Heart left ventricle (tissue), 16 donors: ENCODE measurements at regions of chr7 and their contacts with region 1.

Region 1: DNA sequence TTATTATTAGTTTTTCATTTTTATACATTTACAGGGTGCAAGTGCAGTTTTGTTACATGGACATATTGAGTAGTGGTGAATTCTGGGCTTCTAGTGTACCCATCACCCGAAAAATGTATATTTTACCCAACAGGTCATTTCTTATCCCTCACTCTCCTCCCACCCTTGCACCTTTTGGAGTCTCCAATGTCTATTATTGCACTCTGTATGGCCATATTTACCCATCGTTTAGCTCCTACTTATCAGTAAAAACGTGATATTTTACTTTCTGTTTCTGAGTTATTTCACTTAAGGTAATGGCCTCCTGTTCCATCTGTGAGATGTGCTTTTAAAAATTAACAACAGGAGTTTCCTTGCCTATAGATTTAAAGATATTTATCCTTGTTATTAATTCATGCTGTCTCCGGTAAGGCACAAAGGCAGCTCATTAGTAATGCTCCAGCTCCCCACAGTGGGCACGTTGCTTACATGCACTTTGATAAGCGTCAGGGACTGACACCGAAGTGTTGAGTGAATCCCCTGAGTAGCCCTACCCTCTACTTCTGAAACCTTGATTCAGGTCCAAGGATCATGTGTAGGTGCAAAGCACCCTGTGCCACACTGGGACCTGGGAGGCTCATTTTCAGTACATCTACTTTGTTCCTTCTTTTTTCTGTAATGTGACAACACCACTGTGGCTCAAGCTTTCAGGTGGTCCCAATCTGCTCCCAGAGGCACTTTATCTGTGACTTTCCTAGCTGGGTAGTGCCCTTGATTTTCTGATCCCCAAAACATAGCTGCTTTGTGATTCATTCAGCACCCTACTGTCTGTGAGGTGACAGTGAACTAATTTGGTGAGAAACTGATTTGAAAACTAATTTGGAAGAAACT is 27.3 kb downstream of the HYAL4 start:
- DNase-seq: peak in 4 of 5 donors; percentile 8 to 43 (median 32)
- ATAC-seq: peak; percentile 51 to 89 (median 88)
- H3K4me3 ChIP-seq: peak overlapping the region in 1 of 12 donors; percentile 8
- H3K27ac ChIP-seq: no peak overlapping the region
- H3K4me1 ChIP-seq: peaks cover 0 to 4% (median 0%) of the 10 kb centered on the region in 12 donors
- H3K27me3 ChIP-seq: peaks cover 0 to 3% (median 0%) of the 10 kb centered on the region in 9 donors
- CTCF ChIP-seq: peak; percentile 22 to 67 (median 54)
- POLR2A ChIP-seq: no peak

Region 2: GRCh38 chr7:123494193-123494796 is 377.9 kb before region 1 on chr7:
- intact Hi-C with region 1: loop called in 8 of 10 experiments (anchors 2 to 10 kb)
- DNase-seq: no peak
- ATAC-seq: no peak
- H3K4me3 ChIP-seq: no peak overlapping the region
- H3K27ac ChIP-seq: no peak overlapping the region
- H3K4me1 ChIP-seq: peaks cover 0 to 2% (median 0%) of the 10 kb centered on the region in 12 donors
- H3K27me3 ChIP-seq: peaks cover 0 to 4% (median 0%) of the 10 kb centered on the region in 9 donors
- CTCF ChIP-seq: peak; percentile 67 to 89 (median 80)
- POLR2A ChIP-seq: no peak

Region 3: DNA sequence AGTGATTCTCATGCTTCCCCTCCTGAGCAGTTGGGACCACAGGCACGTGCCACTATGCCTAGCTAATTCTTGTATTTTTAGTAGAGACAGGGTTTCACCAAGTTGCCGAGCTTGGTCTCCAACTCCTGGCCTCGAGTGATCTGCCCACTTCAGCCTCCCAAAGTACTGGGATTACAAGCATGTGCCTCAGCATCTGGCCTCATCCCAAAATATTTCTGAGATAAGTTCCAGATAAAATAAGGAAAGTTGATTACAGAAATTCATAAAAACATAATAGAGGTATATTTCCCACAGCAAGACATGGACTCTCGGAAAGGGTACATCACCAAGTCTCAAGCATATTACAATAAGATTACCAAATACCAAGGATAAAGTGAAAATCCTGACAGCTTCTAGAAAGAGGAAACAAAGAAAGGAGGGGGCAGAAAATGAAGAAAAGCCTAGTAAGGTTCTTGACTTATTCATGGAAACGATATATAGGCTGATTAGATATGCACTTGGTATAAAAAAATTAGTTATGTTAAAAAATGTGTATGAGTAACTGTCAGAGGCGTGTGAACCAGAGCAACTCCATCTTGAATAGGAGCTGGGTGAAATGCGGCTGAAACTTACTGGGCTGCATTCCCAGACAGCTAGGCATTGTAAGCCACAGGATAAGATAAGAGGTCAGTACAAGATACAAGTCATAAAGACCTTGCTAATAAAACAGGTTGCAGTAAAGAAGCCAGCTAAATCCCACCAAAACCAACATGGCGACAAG is 372.8 kb before region 1 on chr7:
- intact Hi-C with region 1: loop called in 8 of 10 experiments (anchors 2 to 10 kb)
- DNase-seq: no peak
- ATAC-seq: no peak
- H3K4me3 ChIP-seq: no peak overlapping the region
- H3K27ac ChIP-seq: no peak overlapping the region
- H3K4me1 ChIP-seq: no peaks in the 10 kb centered on the region
- H3K27me3 ChIP-seq: peaks cover 0 to 4% (median 0%) of the 10 kb centered on the region in 9 donors
- CTCF ChIP-seq: no peak
- POLR2A ChIP-seq: no peak

Region 4: DNA sequence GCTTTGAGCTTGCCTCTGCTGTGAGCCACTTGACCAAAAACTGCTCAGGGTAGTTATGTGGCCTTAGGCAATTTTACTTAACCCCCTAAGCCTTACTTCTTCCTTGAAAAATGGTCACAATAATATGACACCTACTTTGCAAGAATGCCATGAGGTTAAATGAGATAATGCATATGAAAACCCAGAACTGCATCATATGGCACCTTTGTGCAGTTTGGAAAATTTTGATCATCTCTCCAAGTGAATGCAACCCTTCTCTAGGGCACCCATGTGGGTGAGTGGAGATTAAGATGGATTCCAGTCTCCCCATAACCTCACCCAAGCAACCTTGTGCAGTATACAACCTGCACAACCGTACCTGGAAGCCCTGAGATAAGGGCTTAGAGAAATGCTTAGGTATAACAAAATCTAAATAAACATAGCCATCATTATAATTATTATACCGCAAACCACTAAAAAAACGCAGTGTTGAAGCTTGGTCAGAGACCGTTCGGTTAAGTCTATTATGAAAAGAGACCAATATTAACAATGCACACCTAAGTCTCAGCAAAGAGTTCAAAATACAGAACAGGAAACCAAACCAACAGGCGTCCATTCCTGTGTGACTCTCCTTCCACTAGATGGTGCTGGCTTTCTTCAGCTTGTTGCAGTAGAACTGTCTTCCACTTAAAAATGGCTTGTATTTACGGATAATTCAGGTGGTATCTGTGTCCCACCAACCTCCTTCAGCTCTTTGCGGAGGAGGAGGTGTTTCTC is 291.6 kb before region 1 on chr7:
- intact Hi-C with region 1: loop called in 8 of 10 experiments (anchors 2 to 10 kb)
- DNase-seq: no peak
- ATAC-seq: peak; percentile 65 to 84 (median 80)
- H3K4me3 ChIP-seq: no peak overlapping the region
- H3K27ac ChIP-seq: peak overlapping the region in 2 of 12 donors; percentile 2 to 17
- H3K4me1 ChIP-seq: no peaks in the 10 kb centered on the region
- H3K27me3 ChIP-seq: no peaks in the 10 kb centered on the region
- CTCF ChIP-seq: peak; percentile 38 to 74 (median 64)
- POLR2A ChIP-seq: no peak

Region 5: DNA sequence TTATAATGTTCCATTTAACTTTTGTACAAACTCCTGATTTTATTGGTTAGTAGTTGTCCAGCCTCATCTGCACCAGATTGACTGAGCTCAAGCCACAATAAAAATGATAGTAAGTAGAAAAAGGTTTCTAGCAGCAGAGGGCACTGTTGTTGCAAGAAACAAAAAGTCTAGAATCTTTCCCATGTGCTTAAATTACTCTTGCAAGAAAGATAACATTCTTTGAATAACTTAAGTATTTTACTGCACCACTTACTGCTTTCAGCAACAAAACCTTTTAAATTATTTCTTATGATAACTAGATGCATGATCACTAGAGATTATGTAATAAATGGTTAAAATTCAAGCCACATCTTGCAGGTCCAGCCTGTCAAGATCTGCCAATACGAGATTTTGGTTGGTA is 189.5 kb before region 1 on chr7:
- intact Hi-C with region 1: loop called in 5 of 10 experiments (anchors 5 to 10 kb)
- DNase-seq: no peak
- ATAC-seq: peak in 2 of 4 donors; percentile 24 to 40
- H3K4me3 ChIP-seq: no peak overlapping the region
- H3K27ac ChIP-seq: peak overlapping the region in 3 of 12 donors; percentile 54 to 73 (median 61)
- H3K4me1 ChIP-seq: peaks cover 0 to 41% (median 16%) of the 10 kb centered on the region in 12 donors
- H3K27me3 ChIP-seq: no peaks in the 10 kb centered on the region
- CTCF ChIP-seq: peak; percentile 31 to 70 (median 57)
- POLR2A ChIP-seq: no peak

Region 6: DNA sequence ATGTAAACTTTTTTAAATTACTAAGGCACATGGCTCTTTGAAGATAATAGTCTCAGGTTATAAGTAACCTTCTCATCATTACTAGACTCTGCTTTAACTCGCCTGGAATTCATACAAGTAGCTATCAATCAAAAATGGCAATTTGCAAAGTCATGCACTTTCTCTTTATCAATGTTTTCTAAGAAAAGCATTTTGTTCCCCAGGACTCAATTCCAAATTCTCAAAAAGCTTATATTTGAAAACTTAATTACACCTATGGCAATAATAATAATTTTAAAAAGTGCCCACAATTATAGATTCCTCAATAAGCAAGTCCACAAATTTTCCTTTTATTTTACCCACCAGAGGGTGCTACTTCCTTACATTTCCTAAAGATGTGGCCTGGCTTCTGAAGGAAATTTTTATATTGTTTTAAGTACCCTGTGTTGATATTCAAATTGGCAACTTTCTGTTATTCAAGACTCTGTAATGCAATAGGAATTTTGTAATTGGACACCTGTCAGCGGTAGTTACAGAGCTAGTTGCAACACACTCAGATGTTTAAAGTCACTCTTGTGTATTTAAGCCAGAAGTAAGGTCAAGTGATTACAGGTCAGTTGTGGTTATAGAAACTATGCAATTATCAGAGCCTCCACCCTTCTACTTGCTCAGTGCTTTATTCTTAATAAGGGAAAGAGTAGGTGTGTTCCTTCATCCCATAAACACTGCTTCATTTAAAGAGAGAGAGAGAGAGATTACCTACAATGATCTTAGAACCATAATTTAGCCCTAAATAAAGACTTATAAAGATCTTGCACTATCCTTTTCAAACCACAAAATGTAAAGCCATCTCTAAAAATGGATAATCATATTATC is 74.3 kb before region 1 on chr7:
- intact Hi-C with region 1: loop called in 6 of 10 experiments (anchors 2 to 5 kb)
- DNase-seq: no peak
- ATAC-seq: peak in 2 of 4 donors; percentile 49 to 59
- H3K4me3 ChIP-seq: no peak overlapping the region
- H3K27ac ChIP-seq: no peak overlapping the region
- H3K4me1 ChIP-seq: peaks cover 0 to 6% (median 0%) of the 10 kb centered on the region in 12 donors
- H3K27me3 ChIP-seq: no peaks in the 10 kb centered on the region
- CTCF ChIP-seq: peak; percentile 33 to 69 (median 64)
- POLR2A ChIP-seq: no peak